Activated CD4-positive, alpha-beta T cell treated with anti-CD3 and anti-CD28 coated beads, Interleukin-2, amount 10 ng/mL, durations not matched to agents 24 days and 14 days (primary cell): ENCODE measurements at regions of chr2 and their contacts with region 1.

Region 1: DNA sequence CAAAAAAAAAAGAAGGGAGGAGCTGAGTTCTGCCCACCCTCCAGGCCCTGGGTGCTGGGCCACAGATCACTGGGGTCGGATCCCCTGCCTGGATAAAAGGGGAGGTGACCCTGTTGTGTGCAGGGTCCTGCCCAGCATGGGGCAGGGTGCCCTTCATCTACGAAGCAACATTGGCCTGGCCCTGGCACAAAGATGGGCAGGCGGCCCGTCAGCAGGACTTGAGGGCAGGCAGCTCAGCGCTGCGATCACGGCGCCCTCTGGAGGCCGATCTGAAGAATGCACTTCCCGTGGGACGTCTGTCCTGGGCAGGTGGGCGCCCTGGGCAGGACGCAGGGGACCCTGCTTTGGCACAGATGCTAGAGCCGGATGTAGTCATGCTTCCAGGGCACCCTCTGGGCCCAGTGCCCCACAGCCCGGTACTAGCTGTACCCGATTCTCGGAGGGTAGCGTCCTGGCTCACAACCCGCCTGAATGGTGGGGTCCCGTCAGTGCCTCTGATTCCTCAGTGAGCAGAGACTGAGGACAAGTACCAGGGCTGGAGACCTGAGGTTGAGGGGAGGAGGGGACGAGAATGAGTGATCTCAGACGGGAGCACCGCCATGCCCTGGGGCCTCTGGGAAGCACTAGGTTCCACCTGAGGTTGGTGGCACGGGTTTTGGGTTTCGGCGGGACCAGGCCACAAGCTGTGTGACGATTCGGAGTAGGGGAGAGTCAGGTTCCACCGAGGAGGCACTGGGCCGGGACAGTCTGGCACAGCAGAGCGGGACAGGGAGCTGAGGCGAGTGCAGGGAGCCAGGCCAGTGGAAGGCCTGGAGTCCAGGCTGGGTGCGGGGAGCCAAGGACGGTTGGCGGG is 18.0 kb downstream of the ARID5A start:
- DNase-seq: peak; percentile 91
- H3K4me3 Mint-ChIP-seq: no peak overlapping the region
- H3K27ac Mint-ChIP-seq: peak overlapping the region; percentile 37
- H3K4me1 Mint-ChIP-seq: peaks cover 25% of the 10 kb centered on the region
- H3K27me3 Mint-ChIP-seq: no peaks in the 10 kb centered on the region

Region 2: DNA sequence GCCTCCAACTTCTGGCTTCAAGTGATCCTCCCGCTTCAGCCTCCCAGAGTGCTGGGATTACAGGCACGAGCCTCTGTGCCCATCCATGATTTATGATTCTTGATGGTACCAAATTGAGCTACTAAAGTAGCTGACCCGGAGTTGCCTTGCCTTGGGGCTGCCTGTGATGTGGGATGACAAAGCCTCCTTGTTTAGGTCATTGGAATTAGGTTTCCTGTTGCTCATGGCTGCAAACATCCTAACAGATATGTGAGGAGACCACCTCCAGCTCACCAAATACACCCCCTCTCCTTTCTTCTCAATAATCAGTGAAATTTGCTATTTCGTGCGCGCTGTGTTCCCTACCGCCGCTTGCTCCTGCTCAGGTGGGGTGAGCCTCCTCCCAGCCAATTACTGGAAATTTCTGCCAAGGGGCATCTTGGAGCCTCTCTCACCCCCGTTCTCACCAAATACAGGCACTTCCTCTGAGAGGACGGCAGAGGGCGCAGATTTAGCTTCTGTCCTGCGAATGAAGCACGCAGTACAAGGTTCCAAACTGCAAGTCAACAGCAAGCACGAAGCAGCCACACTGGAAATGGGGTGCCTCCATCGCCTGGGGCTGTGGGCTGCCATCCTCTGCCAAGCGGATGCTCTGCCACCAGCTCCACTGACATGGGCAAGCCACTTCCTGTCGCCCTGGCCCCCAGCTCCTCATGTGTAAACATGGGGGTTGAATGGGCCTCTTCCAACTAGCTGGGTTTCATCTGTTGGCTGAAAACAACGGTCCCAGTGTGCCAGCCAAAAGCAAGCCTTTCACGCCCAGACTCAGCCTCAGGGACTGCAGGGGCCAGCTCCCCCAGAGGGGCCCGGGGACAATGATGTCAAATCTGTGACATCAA is 147.2 kb before region 1 on chr2:
- intact Hi-C with region 1: loop called (anchors 1 kb)
- DNase-seq: peak; percentile 90
- H3K4me3 Mint-ChIP-seq: peak overlapping the region; percentile 41
- H3K27ac Mint-ChIP-seq: peak overlapping the region; percentile 80
- H3K4me1 Mint-ChIP-seq: peaks cover 13% of the 10 kb centered on the region
- H3K27me3 Mint-ChIP-seq: no peaks in the 10 kb centered on the region

Region 3: DNA sequence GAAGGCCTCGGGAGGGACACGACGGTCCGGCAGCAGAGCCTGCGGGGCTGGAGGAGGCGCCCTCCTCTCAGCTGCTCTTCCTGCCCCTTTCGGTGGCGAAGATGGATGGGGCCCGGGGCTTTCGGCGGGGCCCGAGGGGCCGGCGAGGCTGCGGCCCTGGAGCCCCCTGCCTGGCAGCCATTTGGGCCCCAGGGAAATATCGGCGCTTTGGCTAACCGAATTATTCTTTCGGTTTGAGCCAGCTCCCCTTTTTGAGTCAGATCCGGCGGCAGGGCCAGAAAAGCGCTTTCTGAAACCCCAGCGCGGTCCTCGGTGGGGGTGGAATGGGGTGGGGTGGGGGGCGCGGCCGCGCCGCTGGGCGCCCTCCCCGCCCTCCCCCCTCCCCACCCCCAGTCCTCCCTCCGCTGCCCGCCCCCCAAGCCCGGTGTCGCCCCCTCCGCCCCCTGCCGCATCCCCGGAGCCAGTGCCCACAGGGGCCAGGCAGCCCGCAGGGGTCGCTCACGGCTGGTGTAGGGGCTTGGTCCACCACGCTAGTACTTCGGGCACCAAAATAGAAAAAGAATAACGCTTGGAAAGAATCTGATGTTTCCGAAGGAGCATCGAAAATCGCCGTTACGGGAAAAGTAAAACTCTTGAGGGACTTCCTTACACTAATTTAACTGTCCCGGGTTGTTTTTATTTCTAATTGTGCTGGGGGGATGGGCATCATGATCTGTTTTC is 27.1 kb before region 1 on chr2:
- intact Hi-C with region 1: loop called (anchors 2 kb)
- DNase-seq: peak; percentile 91
- H3K4me3 Mint-ChIP-seq: peak overlapping the region; percentile 81
- H3K27ac Mint-ChIP-seq: peak overlapping the region; percentile 94
- H3K4me1 Mint-ChIP-seq: peaks cover 86% of the 10 kb centered on the region
- H3K27me3 Mint-ChIP-seq: no peaks in the 10 kb centered on the region

Region 4: GRCh38 chr2:97919858-97920257 is 1365.3 kb after region 1 on chr2:
- intact Hi-C with region 1: no loop called
- DNase-seq: no peak
- H3K4me3 Mint-ChIP-seq: no peak overlapping the region
- H3K27ac Mint-ChIP-seq: no peak overlapping the region
- H3K4me1 Mint-ChIP-seq: peaks cover 5% of the 10 kb centered on the region
- H3K27me3 Mint-ChIP-seq: no peaks in the 10 kb centered on the region